GM12878 (cell line): ENCODE measurements at regions of chr3 and their contacts with region 1.

Region 1: GRCh38 chr3:136752422-136753325 is 496 bp upstream of the STAG1 start:
- DNase-seq: peak; percentile 94
- ATAC-seq: peak; percentile 90
- H3K4me3 ChIP-seq: peak overlapping the region; percentile 63
- H3K27ac ChIP-seq: peak overlapping the region; percentile 91
- H3K4me1 ChIP-seq: peaks cover 16% of the 10 kb centered on the region
- H3K27me3 ChIP-seq: no peaks in the 10 kb centered on the region
- CTCF ChIP-seq: peak in 2 of 3 experiments; percentile 71 to 97; a peak in 4 of 6 replicates
- EP300 ChIP-seq: no peak
- POLR2A ChIP-seq: peak; percentile 89
- RAD21 ChIP-seq: peak; percentile 67

Region 2: GRCh38 chr3:136075218-136075808 is 677.4 kb before region 1 on chr3:
- CTCF ChIA-PET with region 1: interaction called, 38 read pairs
- POLR2A ChIA-PET with region 1: no interaction called
- RAD21 ChIA-PET with region 1: interaction called, 25 read pairs
- SMC1A ChIA-PET with region 1: interaction called, 17 read pairs
- in situ Hi-C with region 1: loop called (anchors 5 kb)
- intact Hi-C with region 1: loop called (anchors 1 kb)
- DNase-seq: peak; percentile 40
- ATAC-seq: peak; percentile 89
- H3K4me3 ChIP-seq: no peak overlapping the region
- H3K27ac ChIP-seq: no peak overlapping the region
- H3K4me1 ChIP-seq: no peaks in the 10 kb centered on the region
- H3K27me3 ChIP-seq: no peaks in the 10 kb centered on the region; a peak in 1 of 4 replicates
- CTCF ChIP-seq: peak; percentile 76 to 96 (median 91)
- EP300 ChIP-seq: no peak
- POLR2A ChIP-seq: no peak
- RAD21 ChIP-seq: peak; percentile 99

Region 3: DNA sequence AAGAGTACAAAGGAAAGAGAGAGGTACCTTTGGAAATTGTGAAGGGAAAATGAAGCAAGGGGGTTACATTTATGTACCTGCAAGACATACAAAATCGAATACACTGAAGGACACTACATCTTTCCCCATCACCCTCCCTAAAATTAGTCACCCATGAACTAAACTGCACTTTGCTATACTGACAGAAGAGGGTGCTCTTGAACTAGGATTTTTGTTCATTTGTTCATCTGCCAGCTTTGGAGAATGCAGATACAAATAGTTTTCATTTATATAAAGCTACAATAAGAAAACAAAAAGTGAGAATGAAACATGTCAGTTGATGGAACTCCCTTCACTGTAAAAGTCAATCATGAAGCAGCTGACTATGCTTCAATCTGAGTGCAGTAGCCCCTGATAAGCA is 446.8 kb before region 1 on chr3:
- CTCF ChIA-PET with region 1: interaction called, 16 read pairs
- POLR2A ChIA-PET with region 1: no interaction called
- RAD21 ChIA-PET with region 1: interaction called, 12 read pairs
- SMC1A ChIA-PET with region 1: interaction called, 5 read pairs
- in situ Hi-C with region 1: no loop called
- intact Hi-C with region 1: loop called (anchors 1 kb)
- DNase-seq: peak; percentile 8
- ATAC-seq: peak; percentile 41; the same call in 1 of the 3 replicates
- H3K4me3 ChIP-seq: no peak overlapping the region
- H3K27ac ChIP-seq: no peak overlapping the region
- H3K4me1 ChIP-seq: no peaks in the 10 kb centered on the region
- H3K27me3 ChIP-seq: no peaks in the 10 kb centered on the region
- CTCF ChIP-seq: peak in 2 of 3 experiments; percentile 18 to 46; a peak in 4 of 6 replicates
- EP300 ChIP-seq: no peak
- POLR2A ChIP-seq: no peak
- RAD21 ChIP-seq: peak; percentile 51

Region 4: GRCh38 chr3:136396916-136397315 is 355.8 kb before region 1 on chr3:
- CTCF ChIA-PET with region 1: interaction called, 136 read pairs
- POLR2A ChIA-PET with region 1: interaction called, 10 read pairs
- RAD21 ChIA-PET with region 1: interaction called, 119 read pairs
- SMC1A ChIA-PET with region 1: interaction called, 106 read pairs
- in situ Hi-C with region 1: no loop called
- intact Hi-C with region 1: no loop called
- DNase-seq: no peak
- ATAC-seq: no peak
- H3K4me3 ChIP-seq: no peak overlapping the region
- H3K27ac ChIP-seq: no peak overlapping the region
- H3K4me1 ChIP-seq: no peaks in the 10 kb centered on the region
- H3K27me3 ChIP-seq: no peaks in the 10 kb centered on the region
- CTCF ChIP-seq: no peak
- EP300 ChIP-seq: no peak
- POLR2A ChIP-seq: no peak
- RAD21 ChIP-seq: no peak

Region 5: GRCh38 chr3:136714020-136714419 is 38.7 kb before region 1 on chr3:
- CTCF ChIA-PET with region 1: no interaction called
- POLR2A ChIA-PET with region 1: no interaction called
- RAD21 ChIA-PET with region 1: no interaction called
- SMC1A ChIA-PET with region 1: no interaction called
- in situ Hi-C with region 1: no loop called
- intact Hi-C with region 1: no loop called
- DNase-seq: no peak
- ATAC-seq: no peak
- H3K4me3 ChIP-seq: no peak overlapping the region
- H3K27ac ChIP-seq: no peak overlapping the region
- H3K4me1 ChIP-seq: no peaks in the 10 kb centered on the region
- H3K27me3 ChIP-seq: no peaks in the 10 kb centered on the region
- CTCF ChIP-seq: no peak
- EP300 ChIP-seq: no peak
- POLR2A ChIP-seq: no peak
- RAD21 ChIP-seq: no peak

Region 6: DNA sequence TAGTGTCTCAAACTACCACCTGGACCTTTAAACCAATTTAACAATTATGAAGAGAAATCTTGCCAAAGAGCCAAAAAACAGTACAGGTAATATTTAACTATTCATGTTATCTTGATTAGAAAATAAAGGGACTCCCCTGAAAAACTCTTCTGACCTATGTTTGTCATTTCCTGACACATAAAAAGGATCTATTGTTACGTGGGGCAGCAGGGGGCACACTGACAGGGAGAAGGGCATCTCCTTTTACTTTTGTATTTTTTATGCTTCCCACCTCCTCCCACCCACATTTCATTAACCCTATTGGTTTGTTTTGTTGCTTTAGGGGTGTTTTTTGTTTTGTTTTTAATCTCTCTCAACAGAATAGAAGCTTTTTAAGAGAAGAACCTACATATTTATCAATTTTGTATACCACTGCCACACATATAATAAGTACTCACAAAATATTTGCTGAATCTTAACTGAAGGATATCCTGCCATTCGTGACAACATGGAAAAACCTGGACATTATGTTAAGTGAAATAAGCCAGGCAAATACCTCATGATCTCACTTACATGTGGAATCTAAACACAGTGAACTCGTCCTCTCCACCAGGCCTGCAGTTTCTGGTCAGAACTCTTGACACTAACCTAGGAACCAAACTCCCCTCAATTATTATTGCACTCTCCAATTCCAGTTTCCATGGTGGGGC is 18.1 kb before region 1 on chr3:
- CTCF ChIA-PET with region 1: interaction called, 7 read pairs
- POLR2A ChIA-PET with region 1: interaction called, 3 read pairs
- RAD21 ChIA-PET with region 1: interaction called, 20 read pairs
- SMC1A ChIA-PET with region 1: interaction called, 15 read pairs
- in situ Hi-C with region 1: no loop called
- intact Hi-C with region 1: no loop called
- DNase-seq: no peak
- ATAC-seq: peak; percentile 60
- H3K4me3 ChIP-seq: no peak overlapping the region
- H3K27ac ChIP-seq: peak overlapping the region; percentile 4; the same call in 1 of the 2 replicates
- H3K4me1 ChIP-seq: peaks cover 18% of the 10 kb centered on the region
- H3K27me3 ChIP-seq: no peaks in the 10 kb centered on the region
- CTCF ChIP-seq: peak in 2 of 3 experiments; percentile 24 to 30; a peak in 1 of 6 replicates
- EP300 ChIP-seq: no peak
- POLR2A ChIP-seq: no peak
- RAD21 ChIP-seq: 0 out of 2 replicates have a peak, but pooled peaks have one; percentile 26

Region 7: GRCh38 chr3:136929984-136930670 is 177.5 kb after region 1 on chr3:
- CTCF ChIA-PET with region 1: interaction called, 4 read pairs
- POLR2A ChIA-PET with region 1: interaction called, 4 read pairs
- RAD21 ChIA-PET with region 1: interaction called, 6 read pairs
- SMC1A ChIA-PET with region 1: interaction called, 5 read pairs
- in situ Hi-C with region 1: no loop called
- intact Hi-C with region 1: loop called (anchors 5 kb)
- DNase-seq: no peak
- ATAC-seq: no peak
- H3K4me3 ChIP-seq: no peak overlapping the region
- H3K27ac ChIP-seq: no peak overlapping the region; the same call in 1 of the 2 replicates
- H3K4me1 ChIP-seq: peaks cover 9% of the 10 kb centered on the region; the same call in 1 of the 2 replicates
- H3K27me3 ChIP-seq: no peaks in the 10 kb centered on the region
- CTCF ChIP-seq: no peak
- EP300 ChIP-seq: no peak
- POLR2A ChIP-seq: no peak
- RAD21 ChIP-seq: no peak

Region 8: GRCh38 chr3:137047240-137047639 is 294.6 kb after region 1 on chr3:
- CTCF ChIA-PET with region 1: no interaction called
- POLR2A ChIA-PET with region 1: no interaction called
- RAD21 ChIA-PET with region 1: no interaction called
- SMC1A ChIA-PET with region 1: no interaction called
- in situ Hi-C with region 1: no loop called
- intact Hi-C with region 1: no loop called
- DNase-seq: no peak
- ATAC-seq: no peak
- H3K4me3 ChIP-seq: no peak overlapping the region
- H3K27ac ChIP-seq: no peak overlapping the region
- H3K4me1 ChIP-seq: no peaks in the 10 kb centered on the region
- H3K27me3 ChIP-seq: no peaks in the 10 kb centered on the region
- CTCF ChIP-seq: no peak
- EP300 ChIP-seq: no peak
- POLR2A ChIP-seq: no peak
- RAD21 ChIP-seq: no peak